ENCODE measurements at regions of chr19 and their contacts with region 1.

Region 1: GRCh38 chr19:44653977-44654774 is 10.5 kb downstream of the PVR start:
- DNase-seq: peak; percentile 87 to 88
- ATAC-seq: peak; percentile 80 to 85
- H3K4me3 ChIP-seq: no peak overlapping the region
- H3K27ac ChIP-seq: peak overlapping the region; percentile 34 to 77; a peak in 5 of 6 replicates
- H3K4me1 ChIP-seq: peaks cover 31% of the 10 kb centered on the region
- CTCF ChIP-seq: peak; percentile 93
- EP300 ChIP-seq: no peak
- POLR2A ChIP-seq: no peak
- RAD21 ChIP-seq: peak; percentile 92 to 94

Region 2: GRCh38 chr19:44576843-44577565 is 77.2 kb before region 1 on chr19:
- CTCF ChIA-PET with region 1: interaction called, 71 read pairs
- POLR2A ChIA-PET with region 1: no interaction called
- DNase-seq: peak; percentile 65 to 81
- ATAC-seq: peak; percentile 91 to 94
- H3K4me3 ChIP-seq: no peak overlapping the region
- H3K27ac ChIP-seq: peak overlapping the region in 1 of 2 experiments; percentile 5; a peak in 1 of 6 replicates
- H3K4me1 ChIP-seq: no peaks in the 10 kb centered on the region
- CTCF ChIP-seq: peak; percentile 86
- EP300 ChIP-seq: no peak
- POLR2A ChIP-seq: no peak
- RAD21 ChIP-seq: peak; percentile 84 to 96

Region 3: GRCh38 chr19:44587963-44588770 is 66.0 kb before region 1 on chr19:
- CTCF ChIA-PET with region 1: interaction called, 107 read pairs
- POLR2A ChIA-PET with region 1: interaction called, 4 read pairs
- DNase-seq: peak; percentile 84 to 85
- ATAC-seq: peak; percentile 85 to 96
- H3K4me3 ChIP-seq: peak overlapping the region; percentile 13; the same call in 1 of the 3 replicates
- H3K27ac ChIP-seq: peak overlapping the region; percentile 90 to 94
- H3K4me1 ChIP-seq: peaks cover 75% of the 10 kb centered on the region
- CTCF ChIP-seq: peak; percentile 83
- EP300 ChIP-seq: peak; percentile 71 to 81; a peak in 3 of 5 replicates
- POLR2A ChIP-seq: no peak
- RAD21 ChIP-seq: peak; percentile 71 to 93

Region 4: GRCh38 chr19:44626048-44626624 is 28.0 kb before region 1 on chr19:
- CTCF ChIA-PET with region 1: interaction called, 62 read pairs
- POLR2A ChIA-PET with region 1: interaction called, 3 read pairs
- DNase-seq: peak; percentile 79 to 93
- ATAC-seq: peak; percentile 90 to 91
- H3K4me3 ChIP-seq: no peak overlapping the region
- H3K27ac ChIP-seq: peak overlapping the region; percentile 81 to 89
- H3K4me1 ChIP-seq: peaks cover 43% of the 10 kb centered on the region
- CTCF ChIP-seq: no peak
- EP300 ChIP-seq: peak; percentile 65 to 74; a peak in 2 of 5 replicates
- POLR2A ChIP-seq: no peak
- RAD21 ChIP-seq: peak; percentile 25 to 34; a peak in 4 of 5 replicates

Region 5: DNA sequence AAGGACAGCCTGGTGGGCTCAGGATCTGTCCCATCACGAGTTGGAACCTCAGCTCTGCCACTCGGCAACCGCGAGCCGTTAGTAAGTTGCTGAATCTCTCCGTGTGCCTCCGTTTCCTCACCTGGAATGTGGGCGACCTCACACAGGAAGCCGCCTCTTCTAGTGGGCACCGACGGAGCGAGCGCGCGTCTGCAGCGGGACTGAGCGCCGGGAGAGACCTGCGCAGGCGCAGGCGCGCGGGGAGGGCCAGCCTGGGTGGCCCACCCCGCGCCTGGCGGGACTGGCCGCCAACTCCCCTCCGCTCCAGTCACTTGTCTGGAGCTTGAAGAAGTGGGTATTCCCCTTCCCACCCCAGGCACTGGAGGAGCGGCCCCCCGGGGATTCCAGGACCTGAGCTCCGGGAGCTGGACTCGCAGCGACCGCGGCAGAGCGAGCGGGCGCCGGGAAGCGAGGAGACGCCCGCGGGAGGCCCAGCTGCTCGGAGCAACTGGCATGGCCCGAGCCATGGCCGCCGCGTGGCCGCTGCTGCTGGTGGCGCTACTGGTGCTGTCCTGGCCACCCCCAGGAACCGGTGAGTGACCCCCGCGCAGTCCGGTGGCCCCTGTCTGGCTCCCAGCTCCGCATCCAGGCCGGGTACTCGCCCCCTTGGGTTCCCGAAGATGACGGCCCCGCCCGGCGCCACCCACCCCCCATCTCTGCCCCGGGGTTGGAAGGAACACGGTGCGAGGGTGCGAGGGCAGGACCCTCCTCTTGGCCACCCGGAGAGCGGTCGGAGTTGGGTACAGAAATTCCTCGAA is 10.4 kb before region 1 on chr19 and contains the start of gene PVR:
- CTCF ChIA-PET with region 1: interaction called, 28 read pairs
- POLR2A ChIA-PET with region 1: interaction called, 14 read pairs
- DNase-seq: peak; percentile 91 to 98
- ATAC-seq: peak; percentile 86 to 90
- H3K4me3 ChIP-seq: peak within 1 kb of the TSS; percentile 61
- H3K27ac ChIP-seq: peak within 1 kb of the TSS; percentile 91 to 97
- H3K4me1 ChIP-seq: peaks cover 75% of the 10 kb centered on the region
- CTCF ChIP-seq: no peak
- EP300 ChIP-seq: peak in 1 of 2 experiments; percentile 51; a peak in 1 of 5 replicates
- POLR2A ChIP-seq: peak; percentile 72
- RAD21 ChIP-seq: no peak; a peak in 1 of 5 replicates
- polyA plus RNA-seq, gene PVR: 108 and 110 TPM in 2 replicates

Region 6: GRCh38 chr19:44764975-44765948 is 111.1 kb after region 1 on chr19:
- CTCF ChIA-PET with region 1: interaction called, 32 read pairs
- POLR2A ChIA-PET with region 1: no interaction called
- DNase-seq: peak in 1 of 2 experiments; percentile 89
- ATAC-seq: peak; percentile 10 to 51; a peak in 3 of 6 replicates
- H3K4me3 ChIP-seq: no peak overlapping the region
- H3K27ac ChIP-seq: peak overlapping the region; percentile 31 to 88
- H3K4me1 ChIP-seq: peaks cover 40% of the 10 kb centered on the region
- CTCF ChIP-seq: no peak
- EP300 ChIP-seq: peak in 1 of 2 experiments; percentile 24; a peak in 2 of 5 replicates
- POLR2A ChIP-seq: no peak
- RAD21 ChIP-seq: no peak

Region 7: GRCh38 chr19:44903602-44904425 is 249.6 kb after region 1 on chr19:
- CTCF ChIA-PET with region 1: no interaction called
- POLR2A ChIA-PET with region 1: no interaction called
- DNase-seq: peak; percentile 79 to 84
- ATAC-seq: peak; percentile 54 to 68
- H3K4me3 ChIP-seq: no peak overlapping the region
- H3K27ac ChIP-seq: peak overlapping the region in 1 of 2 experiments; percentile 56; a peak in 3 of 6 replicates
- H3K4me1 ChIP-seq: peaks cover 29% of the 10 kb centered on the region
- CTCF ChIP-seq: peak; percentile 98
- EP300 ChIP-seq: no peak
- POLR2A ChIP-seq: no peak
- RAD21 ChIP-seq: peak; percentile 85 to 89

Region 8: DNA sequence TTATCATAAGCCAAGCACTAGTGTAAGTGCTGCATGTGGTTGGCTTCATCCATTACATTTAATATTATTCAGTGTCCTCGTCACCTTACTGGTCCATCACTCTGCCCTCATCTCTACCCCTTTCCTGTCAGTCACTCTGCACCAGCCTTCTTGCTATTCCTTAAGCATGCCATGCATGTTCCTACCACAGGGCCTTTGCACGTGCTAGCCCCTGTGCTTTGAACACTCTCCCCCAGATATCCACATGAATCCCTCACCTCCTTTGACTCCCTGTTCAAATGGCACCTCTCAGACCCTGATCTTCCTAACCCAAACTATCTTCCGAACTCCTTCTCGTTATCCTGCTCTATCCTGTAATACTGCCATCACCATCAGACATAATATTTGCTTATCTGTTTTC is 343.8 kb after region 1 on chr19:
- CTCF ChIA-PET with region 1: no interaction called
- POLR2A ChIA-PET with region 1: no interaction called
- DNase-seq: no peak
- ATAC-seq: no peak
- H3K4me3 ChIP-seq: no peak overlapping the region
- H3K27ac ChIP-seq: no peak overlapping the region
- H3K4me1 ChIP-seq: peaks cover 7% of the 10 kb centered on the region; the same call in 1 of the 3 replicates
- CTCF ChIP-seq: no peak
- EP300 ChIP-seq: no peak
- POLR2A ChIP-seq: no peak
- RAD21 ChIP-seq: no peak

Measured in A549 (cell line).